Cardiac septum (tissue), 1 donor: ENCODE measurements at regions of chr15 and their contacts with region 1.

Region 1: DNA sequence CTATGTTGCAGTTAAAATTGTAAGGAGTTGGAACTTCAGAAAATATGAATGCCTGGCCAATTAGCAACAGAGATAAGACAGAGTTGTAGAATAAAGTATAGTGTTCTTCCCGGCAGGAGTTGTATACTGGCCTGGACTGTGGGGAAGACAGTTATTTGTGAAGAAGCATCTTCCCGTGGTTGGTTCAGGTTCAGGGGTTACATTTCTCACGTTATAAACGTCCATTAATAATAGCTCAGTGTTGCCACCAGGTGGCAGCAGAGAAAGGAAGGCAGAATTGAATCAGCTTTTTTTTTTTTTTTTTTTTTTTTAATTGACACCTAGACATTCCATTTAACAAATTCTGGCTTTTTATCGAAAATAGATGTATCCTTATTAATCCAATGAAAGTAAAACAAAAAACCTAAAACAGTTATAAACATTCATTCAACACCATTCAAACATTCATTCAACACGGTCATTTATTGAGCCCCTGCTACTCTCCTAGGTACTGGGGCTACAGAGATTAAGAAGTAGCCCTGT is 66.4 kb upstream of the NR2E3 start:
- DNase-seq: no peak

Region 2: GRCh38 chr15:71201477-71201876 is 542.4 kb before region 1 on chr15:
- intact Hi-C with region 1: no loop called
- DNase-seq: no peak

Region 3: DNA sequence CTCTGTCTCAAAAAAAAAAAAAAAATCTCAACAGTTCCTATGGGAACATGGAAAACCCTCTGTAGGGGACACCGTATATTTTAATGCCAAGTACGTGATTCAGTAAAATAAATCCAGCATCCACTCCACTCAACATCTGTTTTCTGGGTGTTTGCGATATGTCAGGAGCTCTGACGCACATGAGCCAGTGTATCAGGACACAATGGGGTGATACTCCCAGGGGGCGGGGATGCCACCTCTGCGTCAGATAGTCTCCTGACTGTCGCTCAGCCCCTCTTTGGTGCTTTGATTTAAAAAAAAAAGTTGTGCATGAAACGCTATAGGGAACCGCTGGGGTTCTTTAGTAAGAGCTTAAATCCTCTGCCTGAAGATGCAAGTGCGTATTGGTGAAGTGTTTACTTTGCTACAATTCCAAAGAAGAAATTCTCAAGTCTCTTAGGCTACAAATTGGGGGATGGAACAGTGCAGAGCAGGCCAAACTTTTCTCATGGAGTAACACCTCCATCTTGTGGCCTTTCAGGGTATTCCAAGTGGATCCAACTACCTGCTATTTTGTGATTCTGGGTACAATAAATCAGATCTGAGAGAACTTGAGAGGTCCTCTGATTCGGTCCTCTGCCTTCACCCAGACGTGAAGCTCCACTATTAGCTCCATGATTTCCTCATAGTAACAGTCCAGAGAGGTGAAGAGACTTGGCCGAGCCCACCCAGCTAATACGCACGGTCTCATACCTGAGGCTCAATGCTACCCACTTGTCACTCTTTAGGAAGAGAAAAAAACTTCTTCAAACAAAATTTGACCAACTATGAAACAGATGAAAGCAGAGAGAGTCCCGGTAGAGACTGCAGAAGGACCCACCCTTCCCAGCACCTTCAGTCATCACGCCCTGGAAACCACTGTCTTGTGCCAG is 57.2 kb after region 1 on chr15:
- intact Hi-C with region 1: loop called (anchors 5 kb)
- DNase-seq: no peak